Naive thymus-derived CD4-positive, alpha-beta T cell (primary cell): ENCODE measurements at regions of chr15 and their contacts with region 1.

Region 1: DNA sequence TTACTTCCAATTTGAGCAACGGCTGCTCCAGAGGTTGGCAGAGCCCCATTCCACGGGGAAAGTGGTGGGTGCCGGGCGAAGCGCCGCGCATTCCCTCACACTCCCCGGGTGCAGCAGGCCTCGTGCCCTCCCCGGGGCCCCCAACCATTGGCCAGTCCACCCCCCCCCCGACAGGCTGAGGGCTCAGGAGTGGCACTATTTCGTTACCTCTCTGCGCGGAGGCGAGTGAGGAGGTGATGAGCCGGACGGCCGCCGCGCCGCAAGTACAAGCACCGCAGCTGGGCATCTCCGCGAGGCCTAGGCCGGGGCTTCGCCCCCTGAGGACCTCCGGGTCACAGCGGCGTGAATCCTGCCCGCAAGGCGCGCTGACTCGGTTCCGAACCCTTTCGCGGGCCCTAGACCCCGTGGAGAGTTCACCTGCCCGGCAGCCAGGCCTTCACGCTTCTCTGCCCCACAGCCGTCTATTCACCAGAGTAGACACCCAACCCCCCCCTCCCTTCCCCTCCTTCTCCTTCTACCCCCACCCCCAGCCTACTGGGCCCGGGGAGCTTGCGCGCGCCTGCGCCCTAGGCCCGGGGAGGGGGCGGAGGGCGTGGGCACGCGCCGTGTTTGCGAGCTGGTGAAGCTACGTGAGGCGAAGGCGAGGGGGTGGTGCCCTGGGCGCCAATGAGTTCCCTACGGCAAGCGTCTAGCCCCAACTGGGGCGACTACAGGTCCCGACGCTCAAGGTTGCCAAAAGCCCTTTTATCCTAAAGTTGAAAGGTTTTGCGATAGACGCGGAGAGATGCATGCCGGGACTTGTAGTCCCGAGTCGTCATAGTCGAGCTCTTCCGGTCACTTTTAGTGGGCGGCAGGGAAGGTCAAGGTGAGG is at the start of gene CLPX:
- DNase-seq: peak; percentile 80 to 97 (median 95)
- ATAC-seq: peak; percentile 97
- H3K4me3 ChIP-seq: peak within 1 kb of the TSS; percentile 85
- H3K4me3 Mint-ChIP-seq: peak within 1 kb of the TSS; percentile 89 to 96 (median 94)
- H3K27ac ChIP-seq: peak within 1 kb of the TSS; percentile 93
- H3K27ac Mint-ChIP-seq: peak within 1 kb of the TSS; percentile 87 to 98 (median 96)
- H3K4me1 ChIP-seq: peaks cover 4% of the 10 kb centered on the region in 2 donors
- H3K4me1 Mint-ChIP-seq: peaks cover 14 to 40% (median 31%) of the 10 kb centered on the region in 7 donors
- H3K27me3 ChIP-seq: no peaks in the 10 kb centered on the region
- H3K27me3 Mint-ChIP-seq: no peaks in the 10 kb centered on the region
- total RNA-seq, gene CLPX: 33.4 to 56.3 (median 51.1) TPM

Region 2: GRCh38 chr15:64162870-64163658 is 1022.0 kb before region 1 on chr15 and contains the start of gene PPIB:
- CTCF ChIA-PET with region 1: no interaction called
- POLR2A ChIA-PET with region 1: no interaction called
- intact Hi-C with region 1: loop called in 1 of 2 experiments (anchors 1 kb)
- DNase-seq: peak; percentile 89 to 98 (median 96)
- ATAC-seq: peak; percentile 97
- H3K4me3 ChIP-seq: peak within 1 kb of the TSS; percentile 76
- H3K4me3 Mint-ChIP-seq: peak within 1 kb of the TSS; percentile 80 to 97 (median 90)
- H3K27ac ChIP-seq: peak within 1 kb of the TSS; percentile 97
- H3K27ac Mint-ChIP-seq: peak within 1 kb of the TSS; percentile 83 to 97 (median 93)
- H3K4me1 ChIP-seq: peaks cover 17 to 29% of the 10 kb centered on the region in 2 donors
- H3K4me1 Mint-ChIP-seq: peaks cover 30 to 51% (median 46%) of the 10 kb centered on the region in 7 donors
- H3K27me3 ChIP-seq: no peaks in the 10 kb centered on the region
- H3K27me3 Mint-ChIP-seq: peaks cover 0 to 2% (median 0%) of the 10 kb centered on the region in 5 donors
- total RNA-seq, gene PPIB: 160 to 530 (median 184) TPM

Region 3: DNA sequence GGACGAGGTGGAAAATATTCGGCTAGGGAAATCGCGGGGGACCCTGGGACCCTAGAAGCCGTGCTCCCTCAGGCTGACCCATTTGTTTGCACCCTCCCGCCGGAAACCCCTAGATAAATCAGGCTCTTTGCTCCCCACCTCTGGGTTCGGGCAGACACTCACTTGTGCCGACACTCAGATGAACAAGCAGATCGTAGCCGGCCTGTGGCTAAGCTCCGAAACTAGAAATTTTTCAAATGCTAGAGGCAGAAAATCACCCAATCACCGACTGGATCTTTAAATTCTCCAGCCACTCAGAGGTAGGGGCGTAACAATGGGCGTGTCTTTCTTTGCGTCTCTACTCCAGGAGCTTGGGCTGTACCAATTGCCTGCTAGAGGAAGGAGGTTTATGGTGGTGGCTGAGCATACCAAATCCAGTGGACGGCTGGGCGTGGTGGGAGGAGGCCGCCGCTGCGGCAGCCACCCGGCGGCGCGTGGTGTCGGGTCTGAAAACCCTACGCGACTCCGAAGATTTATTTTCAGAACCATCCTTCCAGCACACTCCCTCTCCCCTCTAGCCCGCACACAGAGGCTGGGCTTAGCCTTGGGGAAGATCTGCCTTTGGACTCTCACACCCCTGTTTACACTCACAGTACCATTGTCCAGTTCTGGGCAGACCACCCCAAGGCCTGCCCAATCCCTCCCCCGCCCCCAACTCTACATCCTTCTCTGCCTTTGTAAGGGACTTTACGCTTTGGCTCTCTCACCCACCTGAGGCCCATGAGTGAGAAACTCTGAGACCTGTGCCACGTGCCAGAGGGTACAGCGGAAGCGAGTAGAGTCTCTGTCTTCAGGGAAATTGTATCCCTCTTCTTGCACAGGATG is 359.4 kb before region 1 on chr15 and contains the start of gene PIF1:
- CTCF ChIA-PET with region 1: no interaction called
- POLR2A ChIA-PET with region 1: no interaction called
- intact Hi-C with region 1: loop called in 1 of 2 experiments (anchors 1 kb)
- DNase-seq: peak; percentile 44 to 92 (median 87)
- ATAC-seq: peak; percentile 99
- H3K4me3 ChIP-seq: peak within 1 kb of the TSS; percentile 71
- H3K4me3 Mint-ChIP-seq: peak within 1 kb of the TSS; percentile 82 to 95 (median 88)
- H3K27ac ChIP-seq: peak within 1 kb of the TSS; percentile 37
- H3K27ac Mint-ChIP-seq: peak within 1 kb of the TSS in 8 of 9 donors; percentile 41 to 91 (median 75)
- H3K4me1 ChIP-seq: peaks cover 21 to 24% of the 10 kb centered on the region in 2 donors
- H3K4me1 Mint-ChIP-seq: peaks cover 25 to 42% (median 35%) of the 10 kb centered on the region in 7 donors
- H3K27me3 ChIP-seq: peaks cover 0 to 4% of the 10 kb centered on the region in 2 donors
- H3K27me3 Mint-ChIP-seq: peaks cover 0 to 19% (median 12%) of the 10 kb centered on the region in 5 donors
- total RNA-seq, gene PIF1: 0.34 to 30.2 (median 1.0) TPM in 3 of 5 experiments, not detected in the others

Region 4: DNA sequence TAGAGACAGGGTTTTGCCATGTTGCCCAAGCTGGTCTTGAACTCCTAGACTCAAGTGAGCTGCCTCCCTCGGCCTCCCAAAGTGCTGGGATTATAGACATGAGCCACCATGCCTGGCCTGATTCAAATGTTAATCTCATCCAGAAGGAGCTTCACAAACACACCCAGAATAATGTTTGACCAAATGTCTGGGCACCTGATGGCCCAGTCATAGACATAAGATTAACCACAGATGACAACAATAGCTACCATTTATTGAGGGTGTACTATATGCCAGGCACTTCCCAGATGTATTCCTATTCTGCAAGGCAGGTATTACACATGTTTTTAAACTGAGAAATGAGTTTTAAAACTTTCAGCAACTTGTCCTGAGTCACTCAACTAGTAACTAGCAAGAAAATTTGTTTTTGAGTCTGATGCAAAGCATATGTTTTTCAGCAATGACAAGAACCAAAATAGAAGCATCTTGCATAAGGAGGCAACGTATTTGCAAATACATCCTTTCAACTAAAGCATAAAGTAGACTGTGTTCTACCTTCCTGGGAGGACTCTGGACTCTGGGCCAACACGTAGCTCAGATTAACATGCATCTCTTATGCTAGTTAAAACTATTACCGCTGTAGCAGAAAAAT is 187.2 kb before region 1 on chr15:
- CTCF ChIA-PET with region 1: no interaction called
- POLR2A ChIA-PET with region 1: no interaction called
- intact Hi-C with region 1: no loop called
- DNase-seq: no peak
- ATAC-seq: no peak
- H3K4me3 ChIP-seq: no peak overlapping the region
- H3K4me3 Mint-ChIP-seq: no peak overlapping the region
- H3K27ac ChIP-seq: no peak overlapping the region
- H3K27ac Mint-ChIP-seq: no peak overlapping the region
- H3K4me1 ChIP-seq: no peaks in the 10 kb centered on the region
- H3K4me1 Mint-ChIP-seq: peaks cover 0 to 5% (median 0%) of the 10 kb centered on the region in 7 donors
- H3K27me3 ChIP-seq: no peaks in the 10 kb centered on the region
- H3K27me3 Mint-ChIP-seq: no peaks in the 10 kb centered on the region

Region 5: GRCh38 chr15:65028921-65029735 is 156.0 kb before region 1 on chr15 and contains the start of gene MTFMT:
- CTCF ChIA-PET with region 1: no interaction called
- POLR2A ChIA-PET with region 1: no interaction called
- intact Hi-C with region 1: loop called in 1 of 2 experiments (anchors 1 kb)
- DNase-seq: peak; percentile 72 to 93 (median 87)
- ATAC-seq: peak; percentile 96
- H3K4me3 ChIP-seq: peak within 1 kb of the TSS; percentile 90
- H3K4me3 Mint-ChIP-seq: peak within 1 kb of the TSS; percentile 83 to 98 (median 93)
- H3K27ac ChIP-seq: peak within 1 kb of the TSS; percentile 76
- H3K27ac Mint-ChIP-seq: peak within 1 kb of the TSS; percentile 21 to 95 (median 79)
- H3K4me1 ChIP-seq: peaks cover 9 to 10% of the 10 kb centered on the region in 2 donors
- H3K4me1 Mint-ChIP-seq: peaks cover 15 to 43% (median 33%) of the 10 kb centered on the region in 7 donors
- H3K27me3 ChIP-seq: no peaks in the 10 kb centered on the region
- H3K27me3 Mint-ChIP-seq: peaks cover 4 to 28% (median 11%) of the 10 kb centered on the region in 5 donors
- total RNA-seq, gene MTFMT: 7.1 to 24.8 (median 12.7) TPM

Region 6: GRCh38 chr15:65286704-65287519 is 101.8 kb after region 1 on chr15 and contains the start of gene PARP16:
- CTCF ChIA-PET with region 1: interaction called, 3 read pairs
- POLR2A ChIA-PET with region 1: interaction called, 32 read pairs
- intact Hi-C with region 1: loop called (anchors 1 kb)
- DNase-seq: peak; percentile 85 to 95 (median 87)
- ATAC-seq: peak; percentile 97
- H3K4me3 ChIP-seq: peak within 1 kb of the TSS; percentile 68
- H3K4me3 Mint-ChIP-seq: peak within 1 kb of the TSS; percentile 70 to 92 (median 90)
- H3K27ac ChIP-seq: peak within 1 kb of the TSS; percentile 87
- H3K27ac Mint-ChIP-seq: peak within 1 kb of the TSS; percentile 76 to 94 (median 87)
- H3K4me1 ChIP-seq: peaks cover 15 to 18% of the 10 kb centered on the region in 2 donors
- H3K4me1 Mint-ChIP-seq: peaks cover 30 to 60% (median 41%) of the 10 kb centered on the region in 7 donors
- H3K27me3 ChIP-seq: no peaks in the 10 kb centered on the region
- H3K27me3 Mint-ChIP-seq: no peaks in the 10 kb centered on the region
- total RNA-seq, gene PARP16: 10.9 to 21.5 (median 15.7) TPM

Region 7: GRCh38 chr15:65384895-65385858 is 200.1 kb after region 1 on chr15:
- CTCF ChIA-PET with region 1: no interaction called
- POLR2A ChIA-PET with region 1: no interaction called
- intact Hi-C with region 1: loop called (anchors 1 to 5 kb)
- DNase-seq: peak; percentile 65 to 85 (median 78)
- ATAC-seq: peak; percentile 92
- H3K4me3 ChIP-seq: peak overlapping the region; percentile 83
- H3K4me3 Mint-ChIP-seq: peak overlapping the region; percentile 85 to 91 (median 90)
- H3K27ac ChIP-seq: peak overlapping the region; percentile 49
- H3K27ac Mint-ChIP-seq: peak overlapping the region in 5 of 9 donors; percentile 41 to 78 (median 67)
- H3K4me1 ChIP-seq: peaks cover 4 to 9% of the 10 kb centered on the region in 2 donors
- H3K4me1 Mint-ChIP-seq: peaks cover 4 to 11% (median 8%) of the 10 kb centered on the region in 7 donors
- H3K27me3 ChIP-seq: no peaks in the 10 kb centered on the region
- H3K27me3 Mint-ChIP-seq: peaks cover 5 to 44% (median 14%) of the 10 kb centered on the region in 5 donors

Region 8: GRCh38 chr15:65610871-65611718 is 426.0 kb after region 1 on chr15 and contains the start of gene INTS14:
- CTCF ChIA-PET with region 1: no interaction called
- POLR2A ChIA-PET with region 1: no interaction called
- intact Hi-C with region 1: loop called in 1 of 2 experiments (anchors 5 kb)
- DNase-seq: peak; percentile 74 to 96 (median 80)
- ATAC-seq: peak; percentile 99
- H3K4me3 ChIP-seq: peak within 1 kb of the TSS; percentile 97
- H3K4me3 Mint-ChIP-seq: peak within 1 kb of the TSS; percentile 95 to 99 (median 98)
- H3K27ac ChIP-seq: peak within 1 kb of the TSS; percentile 89
- H3K27ac Mint-ChIP-seq: peak within 1 kb of the TSS; percentile 97 to 100 (median 98)
- H3K4me1 ChIP-seq: peaks cover 18 to 21% of the 10 kb centered on the region in 2 donors
- H3K4me1 Mint-ChIP-seq: peaks cover 11 to 44% (median 32%) of the 10 kb centered on the region in 7 donors
- H3K27me3 ChIP-seq: no peaks in the 10 kb centered on the region
- H3K27me3 Mint-ChIP-seq: no peaks in the 10 kb centered on the region
- total RNA-seq, gene INTS14: 19.1 to 38.3 (median 35.9) TPM